ENCODE measurements at regions of chr17 and their contacts with region 1.

Region 1: DNA sequence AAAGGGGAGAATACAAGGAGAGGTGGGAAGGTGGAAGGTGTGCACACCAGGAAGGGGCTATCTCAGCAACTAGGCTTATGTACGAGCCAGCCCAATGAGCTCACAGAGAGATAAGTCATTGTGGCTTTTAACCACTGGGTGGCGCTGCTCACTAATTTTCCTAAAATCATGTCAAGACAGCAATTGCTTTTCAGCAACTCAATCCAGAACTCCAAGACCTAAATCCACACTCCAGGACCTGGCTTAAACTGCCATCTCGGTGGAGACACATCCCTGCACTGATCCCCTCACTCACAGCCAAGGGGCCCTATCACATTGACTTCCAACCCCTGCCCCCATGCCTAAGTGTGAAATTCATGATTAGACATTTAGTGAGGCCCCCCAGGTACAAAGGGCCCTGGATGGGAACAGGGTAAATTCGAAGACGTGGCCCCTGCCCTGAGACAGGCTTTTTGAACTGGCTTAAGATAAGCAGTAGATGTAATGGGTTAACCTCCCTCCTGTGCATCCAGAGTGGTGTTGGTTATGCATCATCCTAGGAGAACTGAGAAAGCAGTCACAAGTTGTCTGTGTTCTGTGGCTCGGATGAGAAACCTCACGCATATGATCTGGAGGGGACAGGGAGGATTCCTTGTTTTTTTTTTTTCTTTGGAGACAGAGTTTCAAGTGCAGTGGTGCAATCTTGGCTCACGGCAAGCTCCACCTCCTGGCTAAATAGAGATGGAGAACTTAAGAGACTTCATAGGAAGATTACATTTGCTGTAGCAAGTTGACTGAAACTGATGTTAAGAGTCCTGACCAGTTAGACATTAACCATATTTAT is 11.5 kb downstream of the CCL16 start:
- DNase-seq: peak; percentile 61
- H3K4me3 Mint-ChIP-seq: no peak overlapping the region
- H3K27ac Mint-ChIP-seq: no peak overlapping the region
- H3K4me1 Mint-ChIP-seq: no peaks in the 10 kb centered on the region
- H3K27me3 Mint-ChIP-seq: peaks cover 12% of the 10 kb centered on the region

Region 2: GRCh38 chr17:35498448-35499178 is 471.2 kb before region 1 on chr17:
- intact Hi-C with region 1: no loop called
- DNase-seq: no peak
- H3K4me3 Mint-ChIP-seq: no peak overlapping the region
- H3K27ac Mint-ChIP-seq: no peak overlapping the region
- H3K4me1 Mint-ChIP-seq: peaks cover 67% of the 10 kb centered on the region
- H3K27me3 Mint-ChIP-seq: no peaks in the 10 kb centered on the region

Region 3: GRCh38 chr17:35930211-35931065 is 39.3 kb before region 1 on chr17 and contains the start of gene RDM1:
- intact Hi-C with region 1: no loop called
- DNase-seq: peak; percentile 89
- H3K4me3 Mint-ChIP-seq: peak within 1 kb of the TSS; percentile 88
- H3K27ac Mint-ChIP-seq: peak within 1 kb of the TSS; percentile 90
- H3K4me1 Mint-ChIP-seq: peaks cover 29% of the 10 kb centered on the region
- H3K27me3 Mint-ChIP-seq: peaks cover 18% of the 10 kb centered on the region
- total RNA-seq, gene RDM1: 1.7 and 2.3 TPM in 2 replicates

Region 4: DNA sequence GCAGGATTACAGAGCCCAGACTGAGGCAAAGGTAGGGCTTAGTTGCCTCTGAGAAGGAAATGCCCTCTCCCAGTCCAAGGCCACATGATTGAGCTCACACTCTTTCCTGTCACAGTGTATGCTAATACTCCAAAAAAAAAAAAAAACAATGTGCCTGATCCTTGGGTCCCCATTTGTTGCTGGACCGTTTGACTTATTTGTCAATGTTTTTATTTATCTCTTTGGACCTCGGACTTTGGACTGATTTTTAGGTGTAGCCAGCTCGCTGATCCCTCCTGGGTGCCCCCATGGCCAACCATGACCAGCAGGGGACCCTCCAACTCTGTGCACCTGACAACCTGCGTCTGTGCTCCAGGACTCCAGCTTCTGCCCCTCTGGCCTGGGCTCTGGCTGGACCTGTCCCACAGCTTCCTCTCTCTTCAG is 12.2 kb after region 1 on chr17:
- intact Hi-C with region 1: no loop called
- DNase-seq: no peak
- H3K4me3 Mint-ChIP-seq: no peak overlapping the region
- H3K27ac Mint-ChIP-seq: no peak overlapping the region
- H3K4me1 Mint-ChIP-seq: no peaks in the 10 kb centered on the region
- H3K27me3 Mint-ChIP-seq: peaks cover 14% of the 10 kb centered on the region

Region 5: GRCh38 chr17:36148559-36149295 is 179.0 kb after region 1 on chr17:
- intact Hi-C with region 1: loop called (anchors 1 kb)
- DNase-seq: peak; percentile 48
- H3K4me3 Mint-ChIP-seq: no peak overlapping the region
- H3K27ac Mint-ChIP-seq: no peak overlapping the region
- H3K4me1 Mint-ChIP-seq: peaks cover 4% of the 10 kb centered on the region
- H3K27me3 Mint-ChIP-seq: peaks cover 11% of the 10 kb centered on the region

Measured in activated T-helper 1 cell treated with anti-CD3 and anti-CD28 coated beads, Interleukin-12 subunit alpha, Interleukin-12 subunit beta, Interleukin-2, Interleukin-4 antibody, amounts not matched to agents 30 ng/mL and 10 ng/mL and 1 ng/mL, durations not matched to agents 14 hours and 24 hours and 36 hours (primary cell).